ENCODE measurements at regions of chr3 and their contacts with region 1.

Region 1: DNA sequence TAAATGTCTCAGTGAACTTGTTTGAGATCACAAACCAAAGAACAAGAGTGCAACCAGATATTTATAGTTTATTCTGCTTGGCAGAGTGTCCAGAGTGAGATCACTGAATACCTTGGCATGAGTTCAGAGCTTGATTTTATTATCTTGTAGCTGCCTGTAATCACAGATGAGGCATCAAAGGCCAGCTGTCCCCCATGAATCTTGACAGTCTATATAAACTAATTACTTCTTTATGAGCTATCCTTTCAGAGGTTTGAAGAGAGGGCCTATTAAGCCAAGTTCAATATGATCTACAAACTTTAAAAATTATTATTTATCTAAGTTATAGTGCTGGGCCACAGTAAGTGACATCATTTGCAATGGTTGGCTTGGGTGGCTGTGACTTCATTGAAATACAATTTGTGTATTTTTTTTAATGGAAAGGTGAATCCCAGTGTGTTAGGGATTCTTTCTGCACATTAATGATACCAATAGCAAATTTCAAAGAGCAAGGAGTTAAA is 251.5 kb downstream of the CLSTN2 start:
- DNase-seq: peak in 1 of 2 donors; percentile 9
- ATAC-seq: peak; percentile 95 to 97
- H3K4me3 ChIP-seq: no peak overlapping the region
- H3K27ac ChIP-seq: peak overlapping the region; percentile 46 to 75 (median 60)
- H3K4me1 ChIP-seq: peaks cover 31 to 44% of the 10 kb centered on the region in 2 donors
- H3K27me3 ChIP-seq: no peaks in the 10 kb centered on the region
- CTCF ChIP-seq: no peak
- POLR2A ChIP-seq: no peak

Region 2: GRCh38 chr3:140093742-140094141 is 92.7 kb before region 1 on chr3:
- in situ Hi-C with region 1: no loop called
- intact Hi-C with region 1: loop called (anchors 10 kb)
- DNase-seq: peak; percentile 81 to 82
- ATAC-seq: peak; percentile 98 to 99
- H3K4me3 ChIP-seq: no peak overlapping the region
- H3K27ac ChIP-seq: peak overlapping the region in 2 of 4 donors; percentile 31 to 36
- H3K4me1 ChIP-seq: peaks cover 8 to 20% of the 10 kb centered on the region in 2 donors
- H3K27me3 ChIP-seq: no peaks in the 10 kb centered on the region
- CTCF ChIP-seq: no peak
- POLR2A ChIP-seq: no peak

Measured in gastrocnemius medialis (tissue), 4 donors.